GM12878 (cell line): ENCODE measurements at regions of chr2 and their contacts with region 1.

Region 1: DNA sequence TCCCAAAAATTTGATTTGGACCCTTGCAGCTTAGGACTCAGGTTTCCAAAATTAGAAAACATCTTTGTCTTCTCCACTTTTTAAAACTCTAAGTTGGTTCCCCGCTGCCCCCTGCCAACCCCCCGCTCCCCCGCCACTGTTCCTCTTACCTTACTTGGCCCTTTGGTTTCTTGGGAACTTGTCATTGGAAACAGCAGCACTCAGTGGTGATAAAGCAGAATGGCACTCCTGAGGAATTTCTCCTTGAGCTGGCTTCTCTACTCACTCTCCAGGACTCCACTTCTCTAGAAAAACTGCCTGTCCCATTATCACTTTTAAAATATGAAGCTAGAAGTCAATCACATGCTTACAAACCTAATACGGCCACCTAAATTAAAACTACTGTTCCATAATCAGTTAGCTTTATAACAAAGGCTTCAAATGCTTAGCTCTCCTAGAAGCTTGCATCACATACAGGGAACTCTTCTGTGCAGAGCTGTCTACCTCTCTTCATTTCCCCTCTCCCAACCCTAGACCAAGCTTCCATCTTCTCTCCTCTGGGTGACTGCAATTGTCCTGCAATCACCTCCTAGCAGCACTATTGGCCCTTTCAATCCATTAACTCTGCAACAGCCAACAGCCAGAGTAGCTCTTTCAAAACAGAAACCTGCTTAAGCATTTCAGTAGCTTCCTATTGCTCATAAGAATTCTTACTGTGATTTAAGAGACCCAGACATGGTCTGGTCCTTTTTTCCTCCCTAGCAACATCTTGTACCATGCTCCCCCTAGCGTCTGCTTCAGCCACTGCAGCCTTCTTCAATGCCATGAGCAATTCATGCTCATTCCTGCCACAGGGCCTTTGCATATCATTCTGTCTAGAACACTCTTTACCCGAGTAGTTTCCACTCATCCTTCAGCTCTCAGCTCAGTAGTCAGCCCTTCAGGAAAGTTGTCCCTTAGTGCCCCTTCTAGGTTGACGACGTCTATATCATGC is 15.2 kb upstream of the PLEKHM3 start:
- DNase-seq: no peak
- ATAC-seq: peak; percentile 96
- H3K4me3 ChIP-seq: no peak overlapping the region
- H3K27ac ChIP-seq: no peak overlapping the region
- H3K4me1 ChIP-seq: no peaks in the 10 kb centered on the region
- H3K27me3 ChIP-seq: no peaks in the 10 kb centered on the region; a peak in 1 of 4 replicates
- CTCF ChIP-seq: peak; percentile 80 to 93 (median 93)
- EP300 ChIP-seq: no peak
- POLR2A ChIP-seq: no peak
- RAD21 ChIP-seq: peak; percentile 63

Region 2: DNA sequence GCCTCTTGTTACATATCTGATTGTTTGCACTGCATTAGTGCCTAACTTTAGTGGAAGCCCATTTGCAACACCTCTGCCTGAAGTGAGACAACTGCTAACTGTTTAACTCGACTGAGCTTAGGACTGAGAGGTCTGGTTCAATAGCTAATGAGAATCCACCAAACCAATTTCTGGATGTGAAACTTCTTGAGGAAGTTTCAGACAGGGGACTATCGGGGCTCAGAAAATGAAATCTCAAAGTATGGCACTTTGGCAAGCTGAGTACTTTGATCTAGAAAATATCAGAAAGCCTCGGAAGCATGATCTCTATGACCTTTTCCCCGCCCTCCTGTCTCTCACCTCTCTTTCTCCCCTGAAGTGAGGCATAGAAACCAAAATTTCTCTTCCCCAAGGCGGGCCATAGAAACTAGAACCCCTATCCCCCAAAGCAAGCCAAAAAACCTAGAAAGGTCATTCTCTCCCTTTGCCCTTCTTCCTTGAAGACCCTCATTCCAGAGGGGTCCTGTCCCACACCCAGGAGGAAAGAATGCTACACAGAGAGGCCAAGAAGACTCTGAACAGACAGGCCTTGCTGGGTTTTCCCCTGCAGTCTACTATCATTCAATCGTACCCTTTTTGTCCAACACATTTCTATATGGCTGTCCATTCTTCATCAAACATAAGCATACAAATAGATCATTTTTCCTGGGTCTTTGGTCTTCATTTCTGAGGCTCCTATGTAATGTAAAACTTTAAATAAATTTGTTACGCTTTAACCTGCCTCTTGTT is 580.3 kb before region 1 on chr2:
- CTCF ChIA-PET with region 1: no interaction called
- POLR2A ChIA-PET with region 1: no interaction called
- RAD21 ChIA-PET with region 1: no interaction called
- SMC1A ChIA-PET with region 1: no interaction called
- in situ Hi-C with region 1: no loop called
- intact Hi-C with region 1: no loop called
- DNase-seq: peak; percentile 36
- ATAC-seq: peak; percentile 97
- H3K4me3 ChIP-seq: peak overlapping the region; percentile 21; the same call in 1 of the 2 replicates
- H3K27ac ChIP-seq: peak overlapping the region; percentile 15; the same call in 1 of the 2 replicates
- H3K4me1 ChIP-seq: peaks cover 11% of the 10 kb centered on the region
- H3K27me3 ChIP-seq: no peaks in the 10 kb centered on the region
- CTCF ChIP-seq: no peak
- EP300 ChIP-seq: 0 out of 4 replicates have a peak, but pooled peaks of 1 of the 2 experiments have one; percentile 29
- POLR2A ChIP-seq: no peak
- RAD21 ChIP-seq: no peak

Region 3: GRCh38 chr2:207734264-207734635 is 306.2 kb before region 1 on chr2:
- CTCF ChIA-PET with region 1: interaction called, 15 read pairs
- POLR2A ChIA-PET with region 1: no interaction called
- RAD21 ChIA-PET with region 1: interaction called, 3 read pairs
- SMC1A ChIA-PET with region 1: interaction called, 4 read pairs
- in situ Hi-C with region 1: no loop called
- intact Hi-C with region 1: no loop called
- DNase-seq: no peak
- ATAC-seq: peak; percentile 55
- H3K4me3 ChIP-seq: no peak overlapping the region
- H3K27ac ChIP-seq: no peak overlapping the region
- H3K4me1 ChIP-seq: no peaks in the 10 kb centered on the region
- H3K27me3 ChIP-seq: no peaks in the 10 kb centered on the region
- CTCF ChIP-seq: peak; percentile 42 to 58 (median 46); a peak in 4 of 6 replicates
- EP300 ChIP-seq: no peak
- POLR2A ChIP-seq: no peak
- RAD21 ChIP-seq: peak; percentile 58

Region 4: DNA sequence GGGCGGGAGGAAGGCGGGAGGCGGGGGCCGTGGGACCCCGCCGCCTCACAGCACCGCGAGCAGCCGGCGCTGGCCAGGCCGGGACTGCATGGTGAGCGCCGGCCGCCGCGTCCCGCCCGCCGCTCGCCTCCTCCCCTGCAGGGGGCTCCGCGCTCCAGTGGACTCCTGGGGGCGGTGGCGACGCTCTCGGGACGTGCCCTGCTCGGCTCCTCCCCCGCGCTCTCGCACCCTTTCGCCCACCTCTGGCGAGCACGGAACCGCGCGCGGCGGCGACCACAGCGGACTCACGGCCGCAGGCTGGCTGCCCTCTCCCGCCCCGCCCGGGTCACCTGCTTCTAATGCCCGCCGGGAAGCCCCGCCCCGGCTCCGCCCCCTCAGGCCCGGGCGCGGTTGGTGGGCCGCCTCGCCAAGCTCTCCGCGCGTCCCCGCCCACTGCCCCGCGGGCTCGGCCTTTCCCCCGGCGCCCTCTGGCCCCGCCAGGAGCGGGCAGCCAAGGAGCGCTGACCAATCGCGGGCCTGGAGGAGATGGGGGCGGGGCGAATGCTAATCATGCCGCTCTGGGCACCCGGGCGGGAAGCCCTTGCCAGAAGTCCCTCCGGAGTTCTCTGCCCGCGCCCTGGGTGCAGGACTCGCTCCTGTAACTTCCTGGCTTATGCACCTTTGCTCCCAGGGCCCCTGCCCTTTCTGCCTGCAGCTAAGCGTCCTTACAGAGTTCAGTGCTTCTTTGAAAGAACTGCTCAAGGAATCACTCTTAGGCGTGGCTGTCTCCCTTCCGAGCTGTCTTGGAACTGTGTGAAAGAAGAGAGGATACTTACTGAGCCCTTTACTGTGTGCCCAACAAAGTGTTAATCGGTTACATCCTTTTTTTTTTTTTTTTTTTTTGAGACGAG is 270.6 kb before region 1 on chr2 and contains the start of gene FZD5:
- CTCF ChIA-PET with region 1: interaction called, 12 read pairs
- POLR2A ChIA-PET with region 1: no interaction called
- RAD21 ChIA-PET with region 1: interaction called, 5 read pairs
- SMC1A ChIA-PET with region 1: interaction called, 13 read pairs
- in situ Hi-C with region 1: no loop called
- intact Hi-C with region 1: no loop called
- DNase-seq: peak; percentile 68
- ATAC-seq: peak; percentile 92
- H3K4me3 ChIP-seq: peak within 1 kb of the TSS; percentile 87
- H3K27ac ChIP-seq: no peak within 1 kb of the TSS
- H3K4me1 ChIP-seq: peaks cover 17% of the 10 kb centered on the region
- H3K27me3 ChIP-seq: no peaks in the 10 kb centered on the region; a peak in 2 of 4 replicates
- CTCF ChIP-seq: peak; percentile 16 to 46 (median 44); a peak in 3 of 6 replicates
- EP300 ChIP-seq: 0 out of 4 replicates have a peak, but pooled peaks of 1 of the 2 experiments have one; percentile 35
- POLR2A ChIP-seq: peak; percentile 59
- RAD21 ChIP-seq: peak; percentile 28; the same call in 1 of the 2 replicates
- polyA plus RNA-seq, gene FZD5: 0.40 to 0.53 TPM

Region 5: DNA sequence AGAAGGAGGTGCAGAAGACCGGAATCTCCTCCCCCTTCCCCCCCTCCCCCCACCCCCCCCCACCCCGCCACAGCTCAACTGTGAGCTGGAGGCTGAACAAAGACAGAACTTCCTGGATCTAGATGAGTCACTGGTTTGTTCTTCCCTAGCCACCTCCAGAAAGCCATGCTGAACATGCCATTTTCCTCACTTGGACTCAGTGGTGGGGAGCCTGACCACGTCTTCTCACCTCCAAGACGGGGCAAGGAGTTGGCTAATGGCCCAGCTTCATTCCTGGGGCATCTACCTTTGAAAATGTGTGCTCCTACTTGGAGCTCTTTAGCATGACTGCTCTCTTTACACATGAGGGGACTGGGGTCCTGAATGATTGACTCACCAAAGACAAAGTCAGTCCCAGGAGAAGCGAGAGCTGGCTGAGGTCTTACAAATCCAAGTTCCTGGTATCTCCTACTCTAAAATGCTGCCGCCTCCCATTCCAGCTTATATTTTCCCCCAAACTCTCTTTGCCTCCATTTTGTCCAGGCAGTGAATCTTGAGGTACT is 248.2 kb before region 1 on chr2:
- CTCF ChIA-PET with region 1: no interaction called
- POLR2A ChIA-PET with region 1: no interaction called
- RAD21 ChIA-PET with region 1: no interaction called
- SMC1A ChIA-PET with region 1: no interaction called
- in situ Hi-C with region 1: no loop called
- intact Hi-C with region 1: no loop called
- DNase-seq: no peak
- ATAC-seq: peak; percentile 31
- H3K4me3 ChIP-seq: no peak overlapping the region
- H3K27ac ChIP-seq: no peak overlapping the region
- H3K4me1 ChIP-seq: no peaks in the 10 kb centered on the region; the same call in 1 of the 2 replicates
- H3K27me3 ChIP-seq: no peaks in the 10 kb centered on the region
- CTCF ChIP-seq: no peak
- EP300 ChIP-seq: no peak
- POLR2A ChIP-seq: no peak
- RAD21 ChIP-seq: no peak

Region 6: DNA sequence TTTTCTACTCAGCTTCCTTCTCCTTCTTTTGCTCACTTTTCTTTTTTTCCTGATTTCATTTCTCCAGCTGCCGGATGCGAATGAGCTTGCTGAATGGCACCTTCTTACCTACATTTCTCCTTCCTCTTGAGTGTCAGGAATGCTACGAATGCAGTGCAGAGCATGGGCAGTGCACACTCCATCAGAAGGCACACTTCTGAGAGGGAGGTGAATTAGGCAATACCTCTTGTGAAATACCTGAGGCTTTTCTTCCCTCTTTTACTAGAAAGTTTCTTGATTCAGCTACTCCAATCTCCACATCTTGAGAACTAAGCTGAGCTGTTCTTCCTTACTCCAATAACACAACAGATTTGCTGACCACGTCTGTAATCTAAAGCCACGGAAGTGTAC is 66.3 kb before region 1 on chr2:
- CTCF ChIA-PET with region 1: interaction called, 23 read pairs
- POLR2A ChIA-PET with region 1: no interaction called
- RAD21 ChIA-PET with region 1: interaction called, 5 read pairs
- SMC1A ChIA-PET with region 1: interaction called, 15 read pairs
- in situ Hi-C with region 1: no loop called
- intact Hi-C with region 1: loop called (anchors 2 kb)
- DNase-seq: no peak
- ATAC-seq: no peak
- H3K4me3 ChIP-seq: no peak overlapping the region
- H3K27ac ChIP-seq: no peak overlapping the region
- H3K4me1 ChIP-seq: 0 out of 2 replicates have a peak, but pooled peaks cover 3% of the 10 kb centered on the region
- H3K27me3 ChIP-seq: no peaks in the 10 kb centered on the region
- CTCF ChIP-seq: no peak
- EP300 ChIP-seq: no peak
- POLR2A ChIP-seq: no peak
- RAD21 ChIP-seq: no peak

Region 7: DNA sequence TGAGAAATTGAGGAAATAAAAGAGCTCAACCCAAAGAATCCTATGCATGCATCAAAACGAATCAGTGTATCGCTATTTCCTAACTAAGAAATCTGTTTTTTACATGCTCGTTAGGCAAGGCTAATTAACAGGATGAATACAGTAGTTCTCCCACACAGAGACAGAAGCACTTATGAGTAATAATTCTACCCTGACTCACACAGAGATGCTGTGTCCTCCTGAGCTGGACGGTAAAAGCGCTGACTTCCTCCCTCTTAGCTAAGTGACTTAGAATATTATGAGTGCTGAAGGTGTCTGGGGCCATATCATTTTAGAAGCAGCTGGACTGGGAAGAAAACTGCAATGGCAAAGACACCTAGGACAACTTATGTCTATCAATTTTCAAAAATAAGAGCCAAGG is 33.7 kb before region 1 on chr2:
- CTCF ChIA-PET with region 1: interaction called, 13 read pairs
- POLR2A ChIA-PET with region 1: no interaction called
- RAD21 ChIA-PET with region 1: no interaction called
- SMC1A ChIA-PET with region 1: interaction called, 4 read pairs
- in situ Hi-C with region 1: no loop called
- intact Hi-C with region 1: no loop called
- DNase-seq: no peak
- ATAC-seq: peak; percentile 81
- H3K4me3 ChIP-seq: no peak overlapping the region
- H3K27ac ChIP-seq: no peak overlapping the region
- H3K4me1 ChIP-seq: no peaks in the 10 kb centered on the region
- H3K27me3 ChIP-seq: no peaks in the 10 kb centered on the region
- CTCF ChIP-seq: no peak
- EP300 ChIP-seq: no peak
- POLR2A ChIP-seq: no peak
- RAD21 ChIP-seq: no peak

Region 8: DNA sequence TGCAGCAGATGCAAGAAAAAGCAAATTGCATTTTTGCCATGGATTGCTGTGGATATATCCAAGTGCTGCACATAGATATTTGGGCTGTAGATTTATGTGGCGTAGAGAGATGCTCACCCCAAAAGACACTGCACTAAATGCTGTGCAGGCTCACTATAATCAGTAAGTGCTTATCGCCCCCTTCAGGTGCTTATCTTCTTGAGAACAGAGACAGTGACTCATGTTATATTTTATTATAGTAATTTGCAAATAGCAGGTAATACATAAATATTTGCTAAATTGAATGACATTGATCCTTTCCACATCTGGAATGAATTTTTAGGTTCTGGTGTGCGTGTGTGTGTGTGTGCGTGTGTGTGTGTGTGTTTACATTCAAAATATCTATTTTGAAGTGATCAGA is 21.6 kb after region 1 on chr2:
- CTCF ChIA-PET with region 1: interaction called, 28 read pairs
- POLR2A ChIA-PET with region 1: no interaction called
- RAD21 ChIA-PET with region 1: interaction called, 3 read pairs
- SMC1A ChIA-PET with region 1: interaction called, 14 read pairs
- in situ Hi-C with region 1: no loop called
- intact Hi-C with region 1: no loop called
- DNase-seq: no peak
- ATAC-seq: peak; percentile 54
- H3K4me3 ChIP-seq: no peak overlapping the region
- H3K27ac ChIP-seq: no peak overlapping the region
- H3K4me1 ChIP-seq: peaks cover 4% of the 10 kb centered on the region
- H3K27me3 ChIP-seq: no peaks in the 10 kb centered on the region
- CTCF ChIP-seq: peak; percentile 30 to 41 (median 35); a peak in 5 of 6 replicates
- EP300 ChIP-seq: no peak
- POLR2A ChIP-seq: no peak
- RAD21 ChIP-seq: peak; percentile 54

Region 9: DNA sequence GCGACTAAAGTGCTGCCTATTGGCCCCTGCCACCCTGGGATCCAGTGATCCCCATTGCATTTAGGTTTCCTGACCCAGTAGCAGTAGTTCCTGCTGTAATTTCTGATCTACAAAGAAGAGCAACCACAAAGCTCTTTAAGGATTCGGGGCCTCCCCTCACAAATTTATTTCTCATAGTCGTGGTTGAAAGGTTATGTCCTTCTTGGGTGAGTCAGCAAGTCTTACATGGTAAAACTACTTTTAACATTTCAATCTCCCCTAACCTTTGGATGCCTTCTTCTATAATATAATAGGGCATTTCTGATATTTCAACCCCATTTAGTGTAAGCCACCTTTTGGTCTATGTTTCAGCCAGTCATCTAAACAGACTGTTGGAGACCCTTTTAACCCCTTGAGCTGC is 240.4 kb after region 1 on chr2:
- CTCF ChIA-PET with region 1: no interaction called
- POLR2A ChIA-PET with region 1: no interaction called
- RAD21 ChIA-PET with region 1: no interaction called
- SMC1A ChIA-PET with region 1: no interaction called
- in situ Hi-C with region 1: no loop called
- intact Hi-C with region 1: no loop called
- DNase-seq: no peak
- ATAC-seq: peak; percentile 54
- H3K4me3 ChIP-seq: no peak overlapping the region
- H3K27ac ChIP-seq: no peak overlapping the region
- H3K4me1 ChIP-seq: peaks cover 3% of the 10 kb centered on the region; the same call in 1 of the 2 replicates
- H3K27me3 ChIP-seq: no peaks in the 10 kb centered on the region
- CTCF ChIP-seq: no peak
- EP300 ChIP-seq: no peak
- POLR2A ChIP-seq: no peak
- RAD21 ChIP-seq: no peak